ENCODE measurements at regions of chr1 and their contacts with region 1.

Region 1: DNA sequence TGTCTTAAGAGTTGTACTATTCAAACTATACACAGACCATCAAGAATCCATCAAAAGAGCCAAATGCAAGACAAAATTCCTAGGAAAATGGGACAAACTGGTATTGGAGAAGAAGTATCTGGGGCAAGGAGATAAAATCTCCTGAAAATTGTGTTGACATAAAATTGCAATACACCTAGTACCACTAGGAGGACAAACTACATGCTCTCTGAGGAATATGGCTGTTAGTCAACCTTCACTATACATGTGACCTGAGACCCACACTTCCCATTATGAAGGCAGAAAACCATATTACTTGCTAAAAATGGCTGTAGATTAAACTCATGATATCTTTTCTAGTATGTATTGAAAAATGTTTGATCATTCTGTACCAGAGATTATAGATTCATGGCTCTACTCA is 30.0 kb downstream of the IRF2BP2 start:
- DNase-seq: no peak
- H3K4me3 ChIP-seq: no peak overlapping the region
- H3K27ac ChIP-seq: no peak overlapping the region
- H3K4me1 ChIP-seq: peaks cover 0 to 35% (median 34%) of the 10 kb centered on the region in 4 donors
- H3K27me3 ChIP-seq: no peaks in the 10 kb centered on the region
- CTCF ChIP-seq: peak in 1 of 4 experiments; percentile 9
- EP300 ChIP-seq: no peak
- POLR2A ChIP-seq: no peak

Region 2: DNA sequence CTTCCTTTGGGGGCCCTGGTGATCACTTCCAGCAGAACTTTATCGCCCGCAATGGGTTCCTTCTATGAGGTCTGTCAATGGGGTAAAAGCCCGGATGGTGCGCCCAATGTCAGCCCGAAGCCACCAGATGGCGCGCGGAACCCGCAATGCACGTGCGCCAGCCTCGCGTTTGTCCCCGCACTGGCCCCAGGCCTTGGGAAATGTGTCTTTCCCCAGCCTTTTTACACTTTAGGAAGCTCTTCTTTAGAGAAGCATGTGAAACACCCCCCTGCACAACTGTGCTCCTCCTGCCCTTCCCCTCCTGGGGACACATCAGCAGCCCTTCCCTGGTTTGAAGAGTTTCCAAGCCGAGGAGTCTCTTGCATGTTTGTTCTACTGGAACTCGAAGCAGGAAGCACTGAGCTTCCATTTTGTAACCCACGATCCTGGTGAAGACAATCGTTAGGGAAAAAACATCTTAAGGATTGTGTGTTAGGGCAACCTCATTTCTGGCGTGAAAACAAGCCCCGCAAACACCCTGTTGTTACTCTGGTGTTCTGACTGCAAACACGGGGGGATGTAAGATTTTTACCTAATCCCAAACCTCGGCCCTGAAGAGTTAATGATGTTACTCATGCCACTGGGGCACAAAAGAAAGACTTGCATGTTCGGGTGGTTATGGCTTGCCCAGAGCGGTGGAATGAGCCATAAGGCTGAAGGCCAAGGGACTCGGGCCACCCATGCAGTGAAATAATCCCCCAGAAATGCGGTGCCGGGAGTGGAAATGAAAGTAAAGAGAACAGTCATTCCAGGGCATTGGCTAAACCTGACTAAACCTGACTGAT is 80.6 kb before region 1 on chr1:
- intact Hi-C with region 1: loop called (anchors 5 kb)
- DNase-seq: peak; percentile 96
- H3K4me3 ChIP-seq: peak overlapping the region in 3 of 4 donors; percentile 20 to 34 (median 21)
- H3K27ac ChIP-seq: peak overlapping the region; percentile 80 to 89 (median 82)
- H3K4me1 ChIP-seq: peaks cover 0 to 38% (median 29%) of the 10 kb centered on the region in 4 donors
- H3K27me3 ChIP-seq: no peaks in the 10 kb centered on the region
- CTCF ChIP-seq: peak; percentile 94 to 97 (median 95)
- EP300 ChIP-seq: peak in 2 of 4 donors; percentile 56 to 57
- POLR2A ChIP-seq: peak in 1 of 2 donors; percentile 17

Region 3: GRCh38 chr1:234528074-234528865 is 51.7 kb before region 1 on chr1:
- intact Hi-C with region 1: no loop called
- DNase-seq: peak; percentile 58
- H3K4me3 ChIP-seq: no peak overlapping the region
- H3K27ac ChIP-seq: peak overlapping the region; percentile 38 to 99 (median 90)
- H3K4me1 ChIP-seq: peaks cover 0 to 80% (median 54%) of the 10 kb centered on the region in 4 donors
- H3K27me3 ChIP-seq: no peaks in the 10 kb centered on the region
- CTCF ChIP-seq: no peak
- EP300 ChIP-seq: no peak
- POLR2A ChIP-seq: no peak

Region 4: DNA sequence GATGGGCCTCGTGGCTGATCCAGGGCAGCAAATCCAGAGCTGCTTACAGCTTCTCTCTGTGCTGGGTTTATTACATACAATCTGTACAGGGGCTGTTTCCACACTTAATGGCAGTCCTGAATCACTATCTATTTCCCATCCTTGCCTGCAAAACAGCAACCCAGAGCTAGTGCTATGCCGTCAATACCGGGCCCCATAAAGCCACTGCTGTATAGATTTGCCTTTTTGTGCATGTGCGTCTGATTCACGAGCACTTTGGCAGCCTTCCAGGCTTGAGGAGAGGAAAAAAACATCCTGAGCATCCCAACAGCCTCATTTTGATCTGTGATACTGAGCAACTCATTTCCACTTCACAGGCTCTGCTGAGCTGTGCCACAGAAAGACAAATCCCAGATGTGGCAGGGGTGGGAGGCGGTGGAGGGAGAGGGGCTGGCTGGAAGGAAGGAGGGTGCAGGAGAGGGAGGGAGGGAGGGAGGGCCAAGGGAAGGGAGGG is 35.8 kb before region 1 on chr1:
- intact Hi-C with region 1: loop called (anchors 1 kb)
- DNase-seq: peak; percentile 95
- H3K4me3 ChIP-seq: no peak overlapping the region
- H3K27ac ChIP-seq: peak overlapping the region; percentile 88 to 99 (median 96)
- H3K4me1 ChIP-seq: peaks cover 0 to 74% (median 71%) of the 10 kb centered on the region in 4 donors
- H3K27me3 ChIP-seq: no peaks in the 10 kb centered on the region
- CTCF ChIP-seq: no peak
- EP300 ChIP-seq: peak; percentile 71 to 94 (median 80)
- POLR2A ChIP-seq: no peak

Region 5: GRCh38 chr1:234599617-234600417 is 19.9 kb after region 1 on chr1:
- intact Hi-C with region 1: loop called (anchors 1 kb)
- DNase-seq: peak; percentile 95
- H3K4me3 ChIP-seq: peak overlapping the region; percentile 36 to 51 (median 48)
- H3K27ac ChIP-seq: peak overlapping the region; percentile 97 to 100 (median 100)
- H3K4me1 ChIP-seq: peaks cover 0 to 61% (median 53%) of the 10 kb centered on the region in 4 donors
- H3K27me3 ChIP-seq: no peaks in the 10 kb centered on the region
- CTCF ChIP-seq: no peak
- EP300 ChIP-seq: peak; percentile 49 to 88 (median 86)
- POLR2A ChIP-seq: peak; percentile 53 to 64

Measured in sigmoid colon (tissue), 7 donors.